Right ventricle myocardium inferior (tissue), 1 donor: ENCODE measurements at regions of chr15 and their contacts with region 1.

Region 1: GRCh38 chr15:77419836-77420609 is at the start of gene PEAK1:
- DNase-seq: peak; percentile 99
- ATAC-seq: peak; percentile 99
- total RNA-seq, gene PEAK1: 66.6 TPM

Region 2: GRCh38 chr15:77352887-77353286 is 67.1 kb before region 1 on chr15:
- intact Hi-C with region 1: loop called (anchors 5 kb)
- DNase-seq: no peak
- ATAC-seq: no peak

Region 3: DNA sequence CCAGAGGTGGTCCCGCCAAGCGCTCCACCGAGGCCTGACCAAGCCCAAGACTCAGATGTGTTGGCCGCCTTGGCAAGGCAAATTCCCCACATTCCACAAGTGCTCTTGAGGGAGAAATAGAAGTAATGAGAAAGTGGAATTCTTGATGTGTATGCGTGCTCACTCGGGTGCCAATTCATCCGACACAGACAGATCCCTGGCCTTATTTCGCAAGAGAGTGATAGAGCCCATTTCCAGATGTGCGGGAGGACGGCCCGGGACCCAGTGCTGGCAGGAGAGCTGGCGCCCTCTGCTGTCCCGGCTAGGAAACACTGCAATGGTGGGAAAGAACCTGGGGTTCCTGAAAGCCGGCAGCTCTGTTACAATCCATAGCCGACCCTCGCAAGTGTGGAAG is 76.7 kb after region 1 on chr15:
- intact Hi-C with region 1: loop called (anchors 1 kb)
- DNase-seq: peak; percentile 95
- ATAC-seq: peak; percentile 87